ENCODE measurements at regions of chr6 and their contacts with region 1.

Region 1: DNA sequence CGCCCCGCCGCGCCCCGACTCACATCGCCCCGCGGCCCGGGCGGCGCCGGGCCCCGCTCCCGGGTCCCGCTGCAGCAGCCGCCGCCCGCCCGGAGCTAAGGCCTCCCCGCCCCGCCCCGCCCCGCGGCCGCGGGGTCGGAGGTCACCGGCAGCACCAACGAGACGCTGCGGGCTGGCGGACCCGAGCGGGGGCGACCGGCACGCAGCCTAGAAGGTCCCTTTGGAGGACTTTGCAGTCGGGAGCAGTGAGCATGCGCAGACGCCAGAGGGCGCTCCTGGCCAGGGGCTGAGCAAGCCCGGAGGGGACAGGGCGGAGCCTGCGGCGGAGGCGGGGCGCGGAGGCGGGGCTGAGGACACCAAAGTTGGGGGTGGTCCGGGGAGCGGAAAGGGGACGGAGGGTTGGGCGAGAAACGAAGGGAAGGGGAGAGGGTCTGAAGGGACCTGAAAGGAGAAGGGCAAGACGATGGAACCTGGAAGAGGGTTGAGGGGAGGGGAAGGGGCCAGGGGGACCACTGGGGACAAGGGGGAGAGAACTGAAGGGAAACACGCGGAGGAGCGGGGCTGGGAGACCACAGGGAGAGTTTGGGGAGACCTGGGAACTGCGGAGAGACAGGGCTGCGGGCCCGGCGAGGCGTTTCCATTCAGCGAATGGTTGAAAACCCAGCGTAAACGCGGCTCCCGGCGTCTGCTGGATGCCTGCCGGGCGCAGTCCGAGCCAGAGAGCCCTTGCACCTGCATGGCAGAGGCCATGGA is at the start of gene FRS3:
- DNase-seq: peak; percentile 100
- H3K4me3 ChIP-seq: peak within 1 kb of the TSS; percentile 54
- H3K27ac ChIP-seq: peak within 1 kb of the TSS; percentile 80
- H3K4me1 ChIP-seq: peaks cover 6% of the 10 kb centered on the region
- H3K27me3 ChIP-seq: no peaks in the 10 kb centered on the region
- CTCF ChIP-seq: peak; percentile 57
- total RNA-seq, gene FRS3: 2.7 to 3.4 TPM

Region 2: DNA sequence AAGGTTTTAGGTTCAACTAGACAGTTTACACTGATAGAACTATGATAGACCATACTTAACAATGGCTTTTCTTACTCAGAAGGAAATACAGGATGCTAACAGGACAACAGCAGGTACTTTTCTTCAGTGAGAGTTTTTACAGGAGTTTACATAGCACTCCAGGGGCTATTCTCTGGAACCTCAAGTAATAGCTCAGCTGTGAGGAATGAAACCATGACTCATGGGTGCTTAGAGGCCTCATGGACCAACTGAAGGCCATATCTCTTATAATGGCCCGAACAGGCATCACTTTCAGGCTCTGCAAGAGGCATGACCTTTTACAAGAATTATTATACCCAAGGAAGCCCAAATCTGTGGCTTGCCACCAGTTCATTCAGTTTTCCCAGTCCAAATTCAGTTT is 657.6 kb before region 1 on chr6:
- intact Hi-C with region 1: no loop called
- DNase-seq: no peak
- H3K4me3 ChIP-seq: no peak overlapping the region
- H3K27ac ChIP-seq: no peak overlapping the region
- H3K4me1 ChIP-seq: no peaks in the 10 kb centered on the region
- H3K27me3 ChIP-seq: no peaks in the 10 kb centered on the region
- CTCF ChIP-seq: no peak

Region 3: DNA sequence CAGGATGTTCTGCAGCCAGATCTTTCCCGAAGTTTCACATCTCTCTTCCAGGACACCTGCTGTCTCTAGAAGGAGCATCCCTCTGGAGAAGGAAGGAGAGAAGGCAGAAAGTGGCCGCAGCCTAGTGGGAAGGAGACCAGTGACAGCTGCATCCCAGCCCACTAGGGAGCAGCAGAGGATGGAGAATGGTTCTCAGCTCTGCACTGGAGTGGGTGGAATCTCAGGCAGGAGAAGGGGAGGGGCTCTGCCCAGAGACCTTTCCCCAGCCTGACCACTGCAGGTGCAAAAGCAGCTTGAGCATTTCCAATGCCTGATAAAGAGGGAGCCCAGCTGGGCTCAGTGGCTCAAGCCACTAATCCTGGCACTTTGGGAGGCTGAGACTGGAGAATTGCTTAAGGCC is 412.3 kb before region 1 on chr6:
- intact Hi-C with region 1: loop called (anchors 10 kb)
- DNase-seq: peak; percentile 46
- H3K4me3 ChIP-seq: no peak overlapping the region
- H3K27ac ChIP-seq: no peak overlapping the region
- H3K4me1 ChIP-seq: no peaks in the 10 kb centered on the region
- H3K27me3 ChIP-seq: peaks cover 34% of the 10 kb centered on the region
- CTCF ChIP-seq: peak; percentile 40

Region 4: GRCh38 chr6:41548098-41548840 is 231.7 kb before region 1 on chr6:
- intact Hi-C with region 1: no loop called
- DNase-seq: no peak
- H3K4me3 ChIP-seq: peak overlapping the region; percentile 72
- H3K27ac ChIP-seq: no peak overlapping the region
- H3K4me1 ChIP-seq: peaks cover 3% of the 10 kb centered on the region
- H3K27me3 ChIP-seq: no peaks in the 10 kb centered on the region
- CTCF ChIP-seq: no peak

Region 5: GRCh38 chr6:41560431-41561192 is 219.4 kb before region 1 on chr6:
- intact Hi-C with region 1: no loop called
- DNase-seq: peak; percentile 47
- H3K4me3 ChIP-seq: peak overlapping the region; percentile 23
- H3K27ac ChIP-seq: no peak overlapping the region
- H3K4me1 ChIP-seq: no peaks in the 10 kb centered on the region
- H3K27me3 ChIP-seq: no peaks in the 10 kb centered on the region
- CTCF ChIP-seq: no peak

Region 6: GRCh38 chr6:41602864-41603608 is 176.9 kb before region 1 on chr6:
- intact Hi-C with region 1: loop called (anchors 10 kb)
- DNase-seq: peak; percentile 88
- H3K4me3 ChIP-seq: no peak overlapping the region
- H3K27ac ChIP-seq: no peak overlapping the region
- H3K4me1 ChIP-seq: peaks cover 7% of the 10 kb centered on the region
- H3K27me3 ChIP-seq: no peaks in the 10 kb centered on the region
- CTCF ChIP-seq: peak; percentile 75

Region 7: GRCh38 chr6:41705996-41706835 is 73.8 kb before region 1 on chr6:
- intact Hi-C with region 1: loop called (anchors 2 kb)
- DNase-seq: peak; percentile 76
- H3K4me3 ChIP-seq: no peak overlapping the region
- H3K27ac ChIP-seq: peak overlapping the region; percentile 57
- H3K4me1 ChIP-seq: peaks cover 19% of the 10 kb centered on the region
- H3K27me3 ChIP-seq: no peaks in the 10 kb centered on the region
- CTCF ChIP-seq: peak; percentile 77

Region 8: GRCh38 chr6:41735427-41736356 is 44.3 kb before region 1 on chr6 and contains the start of gene TFEB:
- intact Hi-C with region 1: loop called (anchors 5 kb)
- DNase-seq: peak; percentile 96
- H3K4me3 ChIP-seq: peak within 1 kb of the TSS; percentile 80
- H3K27ac ChIP-seq: peak within 1 kb of the TSS; percentile 95
- H3K4me1 ChIP-seq: peaks cover 7% of the 10 kb centered on the region
- H3K27me3 ChIP-seq: no peaks in the 10 kb centered on the region
- CTCF ChIP-seq: peak; percentile 86
- total RNA-seq, gene TFEB: 16.9 to 21.7 TPM

Region 9: DNA sequence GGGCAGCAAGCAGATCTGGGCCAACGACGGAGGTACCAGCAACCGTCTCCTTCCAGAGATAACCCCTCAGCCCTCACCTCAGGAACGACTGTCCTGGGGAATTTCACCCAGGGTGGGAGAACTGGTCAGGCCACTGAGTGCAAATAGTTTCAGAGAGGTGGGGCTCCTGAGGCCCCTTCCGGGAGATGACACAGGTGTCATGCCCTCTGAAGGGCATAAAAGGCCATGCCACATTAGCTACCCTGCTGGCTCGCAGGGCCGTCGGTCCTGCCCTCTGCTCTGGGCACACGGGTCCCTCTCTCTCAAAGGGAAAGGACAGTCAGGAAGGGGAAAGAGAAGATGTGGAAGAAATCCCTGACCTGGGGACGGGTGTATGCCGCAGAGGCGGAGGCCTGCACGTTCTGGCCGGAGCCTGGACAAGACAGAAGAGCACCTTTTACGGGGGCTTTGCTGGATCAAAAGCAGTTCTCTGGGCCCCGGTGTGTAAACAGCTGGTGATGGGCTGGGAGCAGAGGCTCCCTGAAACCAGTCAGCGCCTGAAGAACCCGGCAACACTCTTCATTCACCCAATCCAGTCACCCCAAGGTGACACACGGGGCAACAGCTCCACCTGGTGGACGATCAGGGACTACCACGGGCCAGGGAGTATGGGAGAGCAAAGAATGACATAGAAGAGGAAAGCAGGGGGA is 264.0 kb after region 1 on chr6:
- intact Hi-C with region 1: loop called (anchors 2 kb)
- DNase-seq: peak; percentile 95
- H3K4me3 ChIP-seq: no peak overlapping the region
- H3K27ac ChIP-seq: no peak overlapping the region
- H3K4me1 ChIP-seq: peaks cover 19% of the 10 kb centered on the region
- H3K27me3 ChIP-seq: no peaks in the 10 kb centered on the region
- CTCF ChIP-seq: peak; percentile 97